ENCODE measurements at regions of chr7 and their contacts with region 1.

Region 1: GRCh38 chr7:5665094-5666025 is 116.1 kb downstream of the RNF216 start:
- DNase-seq: peak; percentile 65
- CTCF ChIP-seq: peak; percentile 74

Region 2: DNA sequence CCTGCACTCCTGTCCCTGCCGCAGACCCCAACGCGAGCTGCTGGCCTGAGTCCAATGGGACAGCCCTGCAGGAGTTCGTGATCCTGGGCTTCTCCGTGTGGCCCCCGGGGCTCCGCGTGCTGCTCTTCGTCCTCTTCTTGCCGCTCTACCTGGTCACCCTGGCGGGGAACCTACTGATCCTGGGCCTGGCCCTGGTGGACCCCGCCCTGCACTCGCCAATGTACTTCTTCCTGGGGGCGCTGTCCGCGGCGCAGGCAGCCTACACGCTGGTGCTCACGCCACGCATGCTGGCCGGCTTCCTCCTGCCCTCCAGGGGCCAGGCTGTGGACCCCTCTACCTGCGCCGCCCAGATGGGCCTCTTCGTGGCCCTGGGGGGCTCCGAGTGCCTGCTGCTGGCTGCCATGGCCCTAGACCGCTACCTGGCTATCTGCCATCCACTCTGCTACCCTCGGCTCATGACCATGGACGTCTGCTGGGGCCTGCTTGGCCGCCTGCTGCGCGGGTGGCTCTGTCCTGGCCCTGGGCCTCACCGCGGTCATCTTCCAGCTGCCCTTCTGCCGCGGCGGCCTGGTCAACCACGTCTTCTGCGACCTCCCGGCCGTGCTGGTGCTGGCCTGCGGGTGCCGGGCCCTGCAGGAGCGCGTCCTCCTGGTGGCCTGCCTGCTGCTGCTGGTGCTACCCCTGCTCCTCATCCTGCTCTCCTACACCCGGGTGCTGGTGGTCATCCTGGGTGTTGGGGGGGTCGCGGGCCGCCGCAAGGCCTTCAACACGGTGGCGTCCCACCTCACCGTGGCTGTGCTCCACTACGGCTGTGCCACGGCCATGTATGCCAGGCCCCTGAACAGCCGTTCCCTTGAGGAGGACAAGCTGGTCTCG is 548.0 kb before region 1 on chr7:
- in situ Hi-C with region 1: no loop called
- DNase-seq: no peak
- CTCF ChIP-seq: no peak

Region 3: DNA sequence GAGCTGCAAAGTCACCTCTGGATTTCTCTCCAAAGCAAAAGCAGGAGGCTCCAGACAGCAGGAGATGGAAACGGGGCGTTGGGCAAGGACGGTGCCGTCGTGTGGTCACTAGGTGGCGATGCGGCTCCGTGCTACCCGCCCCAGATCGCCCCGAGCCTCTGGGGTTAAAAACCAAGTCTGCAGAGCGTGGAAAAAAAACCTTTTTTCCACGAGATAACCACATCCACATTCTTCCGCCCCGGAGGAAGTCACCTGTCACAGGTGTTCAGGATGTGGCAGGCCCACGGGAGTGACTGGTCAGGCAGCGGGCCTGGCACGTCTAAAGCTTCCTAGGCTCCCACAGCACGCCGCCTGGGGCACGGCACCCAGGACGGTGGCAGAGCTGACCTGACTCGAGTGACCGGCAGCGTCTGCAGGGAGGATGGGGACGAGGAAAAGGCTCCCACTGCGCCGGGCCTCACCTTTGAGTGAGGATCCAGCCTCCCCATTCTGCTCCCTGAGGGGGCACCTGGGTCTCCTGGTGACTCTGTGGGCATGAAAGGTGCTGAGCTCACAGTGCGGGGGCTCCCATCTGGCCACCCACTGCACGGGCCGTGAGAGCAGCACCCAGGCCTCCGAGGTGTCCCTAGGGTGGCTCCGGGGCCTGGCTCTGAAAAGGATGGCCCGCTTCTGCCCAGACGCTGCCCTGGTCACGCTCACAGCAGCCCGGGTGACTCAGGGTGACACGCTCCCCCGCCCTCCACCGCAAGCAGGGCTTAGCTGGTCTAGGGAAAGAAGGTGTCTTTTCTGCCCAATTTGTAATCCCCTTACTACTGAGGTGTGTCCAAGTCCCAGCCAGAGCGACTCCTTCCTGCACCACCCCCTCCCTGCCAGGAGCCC is 170.4 kb before region 1 on chr7:
- in situ Hi-C with region 1: loop called (anchors 10 kb)
- DNase-seq: peak; percentile 90
- CTCF ChIP-seq: peak; percentile 97

Region 4: DNA sequence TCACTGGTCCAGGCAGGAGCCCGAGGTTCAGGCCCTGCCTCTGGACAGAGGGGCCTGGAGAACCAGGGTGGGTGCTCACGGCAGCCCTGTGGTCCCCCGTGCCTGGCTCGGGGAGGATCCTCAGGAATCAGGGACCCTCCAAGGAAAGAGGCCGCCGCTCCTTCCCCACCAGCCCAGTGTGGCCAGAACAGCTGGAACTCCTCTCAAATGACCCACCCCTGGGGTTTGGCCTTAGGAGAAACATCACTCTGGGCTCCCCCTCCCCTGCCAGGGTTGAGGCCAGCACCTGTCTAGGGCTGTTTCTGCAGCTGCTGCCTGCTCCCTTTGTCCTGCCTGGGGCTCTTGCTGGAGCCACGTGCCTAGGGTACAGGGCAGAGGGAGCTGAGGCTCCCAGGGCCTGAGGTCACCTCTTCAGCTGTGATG is 44.9 kb before region 1 on chr7:
- in situ Hi-C with region 1: no loop called
- DNase-seq: no peak
- CTCF ChIP-seq: no peak

Measured in GM13977 (cell line).